Gastrocnemius medialis (tissue), 4 donors: ENCODE measurements at regions of chr10 and their contacts with region 1.

Region 1: DNA sequence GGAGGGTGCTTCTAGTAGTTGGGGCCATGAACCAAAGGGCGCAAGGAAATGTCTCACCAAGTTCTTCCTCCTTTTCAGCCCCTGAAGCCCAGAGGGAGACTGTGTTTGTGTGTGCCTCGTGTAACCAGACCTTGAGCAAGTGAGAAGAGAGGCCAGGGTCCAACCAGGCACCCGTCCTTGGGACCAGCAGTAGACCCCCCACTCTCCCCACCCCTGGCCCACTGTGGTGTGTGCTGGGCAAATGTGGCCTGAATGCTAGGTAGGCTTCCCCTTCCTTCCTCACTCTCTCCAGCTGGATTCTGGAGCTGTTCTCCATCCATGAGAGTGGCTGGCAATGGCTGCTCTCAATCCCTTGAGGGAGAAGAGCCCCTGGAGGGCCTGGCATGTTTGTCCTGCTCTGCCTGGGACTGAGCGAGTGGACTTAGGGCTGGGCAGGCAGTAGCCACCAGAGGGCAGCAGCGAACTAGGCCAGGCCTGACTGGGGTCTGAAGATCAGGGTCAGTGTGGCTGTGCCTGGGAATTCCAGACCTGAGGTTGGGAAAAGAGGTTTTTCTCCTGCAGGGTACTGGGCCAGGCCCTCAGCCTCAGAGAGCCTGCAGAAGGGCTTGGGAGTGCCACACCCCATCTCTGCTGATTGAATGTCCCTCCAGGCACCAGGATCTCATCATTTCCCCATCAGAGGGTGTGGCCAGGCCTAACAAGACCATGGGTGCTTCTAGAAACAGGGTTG is 12.5 kb downstream of the SFRP5 start:
- DNase-seq: peak in 1 of 2 donors; percentile 32
- ATAC-seq: peak; percentile 72 to 77
- H3K4me3 ChIP-seq: no peak overlapping the region
- H3K27ac ChIP-seq: no peak overlapping the region
- H3K4me1 ChIP-seq: peaks cover 0 to 13% of the 10 kb centered on the region in 2 donors
- H3K27me3 ChIP-seq: no peaks in the 10 kb centered on the region
- CTCF ChIP-seq: peak; percentile 40 to 83 (median 76)
- POLR2A ChIP-seq: no peak

Region 2: GRCh38 chr10:97869091-97870042 is 110.0 kb after region 1 on chr10:
- in situ Hi-C with region 1: no loop called
- intact Hi-C with region 1: loop called (anchors 1 kb)
- DNase-seq: peak; percentile 88 to 92
- ATAC-seq: peak; percentile 98 to 99
- H3K4me3 ChIP-seq: no peak overlapping the region
- H3K27ac ChIP-seq: peak overlapping the region in 2 of 4 donors; percentile 33 to 63
- H3K4me1 ChIP-seq: peaks cover 4 to 6% of the 10 kb centered on the region in 2 donors
- H3K27me3 ChIP-seq: peaks cover 0 to 4% (median 0%) of the 10 kb centered on the region in 3 donors
- CTCF ChIP-seq: peak; percentile 86 to 97 (median 91)
- POLR2A ChIP-seq: no peak